Heart right ventricle (tissue), 16 donors: ENCODE measurements at regions of chr10 and their contacts with region 1.

Region 1: DNA sequence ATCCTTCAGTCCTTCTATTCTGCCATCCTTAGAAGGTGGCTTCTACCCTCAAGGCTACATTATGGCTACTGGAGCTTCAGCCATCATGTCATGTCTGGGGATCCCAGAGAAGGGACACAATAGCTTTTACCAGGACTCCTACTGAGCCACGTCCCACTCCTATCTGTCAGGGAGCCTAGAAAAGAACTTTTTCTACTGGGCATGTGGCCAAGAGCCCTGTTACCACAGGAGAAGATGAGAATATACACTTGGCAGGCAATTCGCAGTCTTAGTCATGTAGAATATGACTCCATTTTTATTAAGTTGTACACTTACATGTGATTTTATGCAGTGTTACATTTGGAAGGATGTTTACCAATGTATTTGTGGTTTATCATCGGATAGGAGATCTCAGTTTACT is 64.6 kb upstream of the KCNMA1 start:
- DNase-seq: no peak
- ATAC-seq: no peak
- H3K4me3 ChIP-seq: no peak overlapping the region
- H3K27ac ChIP-seq: no peak overlapping the region
- H3K4me1 ChIP-seq: no peaks in the 10 kb centered on the region
- H3K27me3 ChIP-seq: peaks cover 0 to 31% (median 9%) of the 10 kb centered on the region in 7 donors
- CTCF ChIP-seq: no peak

Region 2: DNA sequence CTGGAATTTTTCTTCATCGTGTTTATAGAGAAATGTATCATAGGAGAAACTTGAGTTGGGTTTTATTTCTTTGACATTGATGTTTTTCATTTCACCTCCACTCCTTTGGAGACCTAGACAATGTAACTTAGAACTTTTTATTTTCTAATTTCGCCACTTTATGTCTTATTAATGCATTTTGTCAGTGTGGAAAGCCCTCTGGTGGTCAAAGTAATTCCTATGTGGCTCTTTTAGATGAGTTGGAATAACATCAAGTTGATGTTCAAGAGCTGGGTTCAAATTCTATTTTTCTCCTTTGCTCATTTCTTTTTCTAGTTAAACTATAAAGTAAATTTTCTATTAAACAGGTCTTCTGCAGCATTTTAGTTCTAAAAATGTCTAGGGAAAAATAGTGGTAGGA is 1792.1 kb before region 1 on chr10:
- intact Hi-C with region 1: loop called in 1 of 10 experiments (anchors 10 kb)
- DNase-seq: no peak
- ATAC-seq: no peak
- H3K4me3 ChIP-seq: no peak overlapping the region
- H3K27ac ChIP-seq: no peak overlapping the region
- H3K4me1 ChIP-seq: peaks cover 0 to under 1% (median 0%) of the 10 kb centered on the region in 9 donors
- H3K27me3 ChIP-seq: no peaks in the 10 kb centered on the region
- CTCF ChIP-seq: peak; percentile 21 to 64 (median 59)

Region 3: GRCh38 chr10:77667426-77668324 is 34.5 kb before region 1 on chr10:
- intact Hi-C with region 1: no loop called
- DNase-seq: no peak
- ATAC-seq: no peak
- H3K4me3 ChIP-seq: no peak overlapping the region
- H3K27ac ChIP-seq: no peak overlapping the region
- H3K4me1 ChIP-seq: no peaks in the 10 kb centered on the region
- H3K27me3 ChIP-seq: peaks cover 0 to 48% (median 23%) of the 10 kb centered on the region in 7 donors
- CTCF ChIP-seq: no peak